GM10248 (cell line): ENCODE measurements at regions of chr1 and their contacts with region 1.

Region 1: DNA sequence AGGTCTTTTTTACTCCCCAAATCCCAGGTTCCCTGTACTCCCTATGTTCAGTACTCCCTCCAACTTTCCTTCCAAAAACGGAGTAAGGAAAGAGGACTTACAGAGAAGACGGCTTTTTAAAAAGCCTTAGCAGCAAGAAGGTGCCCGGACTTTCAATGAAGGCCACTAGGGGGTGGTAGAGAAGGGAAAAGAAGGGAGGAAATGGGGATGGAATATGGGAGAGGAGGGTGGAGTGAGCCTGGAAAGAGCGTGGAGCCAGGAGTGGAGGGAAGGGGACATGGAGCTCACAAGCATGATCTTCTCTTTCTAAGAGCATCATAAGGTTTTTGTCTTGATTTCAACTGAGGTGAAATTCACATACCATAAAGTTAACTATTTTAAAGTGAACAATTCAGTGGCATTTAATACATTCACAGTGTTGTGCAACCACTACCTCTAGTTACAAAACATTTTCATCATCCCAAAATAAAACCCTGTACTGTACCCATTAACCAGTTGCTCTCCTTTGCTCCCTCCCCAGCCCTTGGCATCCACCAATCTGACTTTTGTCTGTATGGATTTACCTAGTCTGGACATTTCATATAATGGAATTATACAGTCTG is 129.9 kb downstream of the ZNF281 start:
- DNase-seq: peak; percentile 41
- CTCF ChIP-seq: peak; percentile 69

Region 2: GRCh38 chr1:200053646-200054045 is 226.3 kb before region 1 on chr1:
- CTCF ChIA-PET with region 1: no interaction called
- POLR2A ChIA-PET with region 1: no interaction called
- DNase-seq: no peak
- CTCF ChIP-seq: no peak

Region 3: GRCh38 chr1:200258447-200259375 is 21.2 kb before region 1 on chr1:
- CTCF ChIA-PET with region 1: interaction called, 14 read pairs
- POLR2A ChIA-PET with region 1: no interaction called
- DNase-seq: peak; percentile 37
- CTCF ChIP-seq: peak; percentile 33

Region 4: DNA sequence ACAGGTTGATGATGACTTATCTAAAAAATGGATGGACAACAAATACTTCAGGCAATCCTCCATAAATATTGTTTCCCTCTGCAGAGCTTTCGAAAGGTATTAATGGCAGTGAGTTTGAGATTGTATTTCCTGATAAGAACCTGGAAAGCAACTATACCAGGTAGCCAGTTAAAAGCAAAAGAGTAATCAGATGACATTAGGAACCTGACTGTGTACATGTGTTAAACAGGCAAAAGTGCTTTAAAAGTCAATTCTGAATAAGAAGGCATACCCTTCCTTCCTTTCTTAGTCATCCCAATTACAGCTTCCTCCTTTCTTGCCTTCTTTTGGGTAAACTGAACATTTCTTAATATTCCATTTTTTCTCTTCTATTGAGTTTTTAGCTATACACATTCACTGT is 14.9 kb before region 1 on chr1:
- CTCF ChIA-PET with region 1: interaction called, 14 read pairs
- POLR2A ChIA-PET with region 1: no interaction called
- DNase-seq: no peak
- CTCF ChIP-seq: no peak

Region 5: DNA sequence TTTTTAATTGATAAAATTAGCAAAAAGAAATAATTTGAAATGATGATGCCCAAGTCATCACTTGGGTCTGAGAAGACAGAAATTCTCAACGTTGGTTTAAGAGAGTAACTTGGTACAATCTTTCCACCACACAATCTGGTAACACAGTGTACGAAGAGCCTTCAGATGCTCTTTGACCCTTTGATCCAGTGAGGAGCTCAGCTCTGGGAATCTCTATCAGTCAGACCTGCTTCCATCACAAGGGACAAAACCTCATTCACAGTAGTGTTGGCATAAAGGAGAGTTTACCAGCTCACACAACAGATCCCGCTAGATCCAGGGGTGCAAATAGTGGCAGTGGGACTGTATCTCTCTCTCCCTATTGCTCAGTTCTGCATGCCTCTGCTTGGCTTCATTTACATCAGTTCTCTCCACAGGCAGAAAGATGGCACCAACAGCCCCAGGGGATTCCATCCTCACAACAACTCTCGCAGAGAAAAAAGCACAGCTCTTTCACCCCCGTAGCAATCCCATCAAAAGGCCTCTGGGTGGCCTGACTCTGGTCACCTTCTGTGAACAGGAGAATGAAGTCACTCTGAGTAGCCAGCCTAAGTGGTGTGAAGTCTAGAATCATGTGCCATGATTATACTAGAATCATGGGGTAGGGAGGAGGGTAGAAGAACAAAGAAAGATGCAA is 10.2 kb after region 1 on chr1:
- CTCF ChIA-PET with region 1: interaction called, 14 read pairs
- POLR2A ChIA-PET with region 1: no interaction called
- DNase-seq: no peak
- CTCF ChIP-seq: no peak

Region 6: GRCh38 chr1:200296091-200296661 is 16.3 kb after region 1 on chr1:
- CTCF ChIA-PET with region 1: interaction called, 13 read pairs
- POLR2A ChIA-PET with region 1: no interaction called
- DNase-seq: no peak
- CTCF ChIP-seq: no peak

Region 7: GRCh38 chr1:200302192-200302920 is 22.4 kb after region 1 on chr1:
- CTCF ChIA-PET with region 1: interaction called, 13 read pairs
- POLR2A ChIA-PET with region 1: no interaction called
- DNase-seq: peak; percentile 69
- CTCF ChIP-seq: peak; percentile 8

Region 8: DNA sequence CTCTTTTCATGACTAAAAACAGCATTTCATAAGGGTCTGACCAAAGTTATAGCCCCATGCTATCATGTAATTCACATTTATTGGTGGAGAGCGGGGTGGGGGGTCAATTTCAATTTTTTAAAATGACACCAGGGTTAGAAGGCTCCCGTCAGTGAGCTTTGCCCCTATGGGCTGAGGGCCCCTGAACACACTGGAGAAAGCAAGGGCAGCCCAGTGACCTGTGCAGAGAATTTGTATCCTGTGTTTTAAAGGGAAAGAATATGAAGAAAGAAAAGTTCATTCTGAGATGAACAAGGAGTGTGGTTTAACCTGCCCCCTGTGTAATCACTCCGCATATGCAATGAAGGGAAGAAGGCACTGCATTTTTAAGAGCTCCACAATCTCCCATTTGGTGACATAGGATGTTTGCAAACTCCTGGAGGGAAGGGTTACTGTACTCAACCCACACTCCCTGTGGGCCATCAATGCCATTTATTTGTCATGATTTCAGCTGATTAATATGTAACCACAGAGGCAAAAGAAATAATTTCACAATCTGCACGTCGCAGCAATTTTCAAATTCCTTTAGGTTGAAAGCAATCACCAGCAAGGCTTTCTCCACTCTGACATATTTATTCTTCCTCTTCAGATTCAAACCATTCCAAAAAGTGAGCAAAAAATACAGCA is 34.3 kb after region 1 on chr1:
- CTCF ChIA-PET with region 1: no interaction called
- POLR2A ChIA-PET with region 1: no interaction called
- DNase-seq: no peak
- CTCF ChIP-seq: no peak

Region 9: GRCh38 chr1:200488375-200489165 is 208.7 kb after region 1 on chr1:
- CTCF ChIA-PET with region 1: interaction called, 23 read pairs
- POLR2A ChIA-PET with region 1: no interaction called
- DNase-seq: peak; percentile 66
- CTCF ChIP-seq: peak; percentile 86